Heart left ventricle (tissue), 16 donors: ENCODE measurements at regions of chr6 and their contacts with region 1.

Region 1: GRCh38 chr6:26122793-26123674 is 35.8 kb downstream of the HFE start:
- DNase-seq: peak; percentile 89 to 99 (median 98)
- ATAC-seq: peak; percentile 87 to 90 (median 88)
- H3K4me3 ChIP-seq: peak overlapping the region; percentile 73 to 97 (median 82)
- H3K27ac ChIP-seq: peak overlapping the region; percentile 95 to 99 (median 98)
- H3K4me1 ChIP-seq: peaks cover 0 to 25% (median 17%) of the 10 kb centered on the region in 12 donors
- H3K27me3 ChIP-seq: no peaks in the 10 kb centered on the region
- CTCF ChIP-seq: peak in 1 of 12 donors; percentile 7
- POLR2A ChIP-seq: peak; percentile 54 to 58

Region 2: DNA sequence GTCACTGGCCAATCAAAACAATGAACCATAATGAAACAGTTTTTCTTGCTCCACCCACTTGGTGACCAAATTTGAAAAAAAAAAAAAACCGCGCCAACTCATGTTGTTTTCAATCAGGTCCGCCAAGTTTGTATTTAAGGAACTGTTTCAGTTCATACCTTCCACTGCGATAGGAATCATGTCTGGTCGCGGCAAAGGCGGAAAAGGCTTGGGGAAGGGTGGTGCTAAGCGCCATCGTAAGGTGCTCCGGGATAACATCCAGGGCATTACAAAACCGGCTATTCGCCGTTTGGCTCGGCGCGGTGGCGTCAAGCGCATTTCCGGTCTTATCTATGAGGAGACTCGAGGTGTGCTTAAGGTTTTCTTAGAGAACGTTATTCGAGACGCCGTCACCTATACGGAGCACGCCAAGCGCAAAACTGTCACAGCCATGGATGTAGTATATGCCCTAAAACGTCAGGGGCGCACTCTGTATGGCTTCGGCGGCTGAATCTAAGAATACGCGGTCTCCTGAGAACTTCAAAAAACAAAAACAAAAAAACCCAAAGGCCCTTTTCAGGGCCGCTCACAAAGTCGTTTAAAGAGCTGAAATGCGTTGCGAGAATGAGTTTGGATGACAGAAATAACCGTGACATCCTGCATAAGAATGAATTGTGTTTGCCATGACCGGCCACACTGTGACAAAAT is 19.1 kb before region 1 on chr6:
- intact Hi-C with region 1: loop called in 5 of 10 experiments (anchors 1 to 2 kb)
- DNase-seq: peak; percentile 86 to 90 (median 87)
- ATAC-seq: peak; percentile 81 to 95 (median 93)
- H3K4me3 ChIP-seq: peak overlapping the region; percentile 5 to 69 (median 60)
- H3K27ac ChIP-seq: peak overlapping the region; percentile 18 to 90 (median 77)
- H3K4me1 ChIP-seq: peaks cover 0 to 18% (median 8%) of the 10 kb centered on the region in 12 donors
- H3K27me3 ChIP-seq: no peaks in the 10 kb centered on the region
- CTCF ChIP-seq: peak in 10 of 12 donors; percentile 17 to 54 (median 36)
- POLR2A ChIP-seq: peak; percentile 37 to 95

Region 3: DNA sequence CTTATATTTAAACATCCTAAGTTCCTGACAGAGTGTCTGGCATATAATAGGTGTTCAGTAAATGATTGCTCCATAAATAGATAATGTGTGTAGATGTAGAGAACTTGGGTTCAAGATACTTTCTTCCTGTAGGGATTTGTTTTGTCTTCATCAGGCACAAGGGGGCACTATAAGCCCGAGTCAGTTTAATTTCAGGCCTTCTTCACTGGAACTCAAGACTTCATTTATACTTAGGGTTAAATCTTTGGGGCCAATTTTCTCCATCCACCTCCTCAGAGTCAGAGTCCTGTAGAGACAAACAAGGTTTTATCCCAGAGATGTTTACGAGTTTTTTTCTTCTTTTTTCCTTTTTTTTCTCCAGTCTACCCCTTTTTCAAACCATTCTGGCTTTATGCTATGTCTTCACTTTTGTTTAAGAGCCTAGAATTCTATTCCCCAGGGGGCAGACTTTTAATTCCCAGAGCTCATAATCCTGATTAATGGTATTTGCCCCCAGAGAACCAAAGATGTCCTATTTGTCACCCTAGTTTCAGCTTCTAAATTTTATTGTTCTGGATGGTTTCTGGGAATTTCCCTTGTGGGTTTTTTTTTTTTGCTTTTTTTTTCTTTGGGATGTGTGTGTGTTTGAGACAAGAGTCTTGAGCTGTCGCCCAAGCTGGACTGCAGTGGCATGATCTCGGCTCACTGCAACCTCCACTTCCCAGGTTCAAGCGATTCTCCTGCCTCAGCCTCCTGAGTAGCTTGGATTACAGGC is 52.6 kb after region 1 on chr6:
- intact Hi-C with region 1: loop called in 1 of 10 experiments (anchors 1 kb)
- DNase-seq: no peak
- ATAC-seq: no peak
- H3K4me3 ChIP-seq: no peak overlapping the region
- H3K27ac ChIP-seq: peak overlapping the region in 2 of 12 donors; percentile 1 to 40
- H3K4me1 ChIP-seq: peaks cover 0 to 20% (median 9%) of the 10 kb centered on the region in 12 donors
- H3K27me3 ChIP-seq: no peaks in the 10 kb centered on the region
- CTCF ChIP-seq: peak; percentile 45 to 76 (median 62)
- POLR2A ChIP-seq: no peak

Region 4: GRCh38 chr6:26204332-26205165 is 81.5 kb after region 1 on chr6:
- intact Hi-C with region 1: loop called in 6 of 10 experiments (anchors 2 to 10 kb)
- DNase-seq: peak; percentile 89 to 97 (median 95)
- ATAC-seq: peak; percentile 90 to 94 (median 92)
- H3K4me3 ChIP-seq: peak overlapping the region; percentile 56 to 83 (median 74)
- H3K27ac ChIP-seq: peak overlapping the region; percentile 83 to 98 (median 94)
- H3K4me1 ChIP-seq: peaks cover 0 to 43% (median 7%) of the 10 kb centered on the region in 12 donors
- H3K27me3 ChIP-seq: peaks cover 0 to 15% (median 0%) of the 10 kb centered on the region in 9 donors
- CTCF ChIP-seq: peak in 11 of 12 donors; percentile 19 to 71 (median 36)
- POLR2A ChIP-seq: peak in 1 of 2 donors; percentile 82

Region 5: GRCh38 chr6:26351544-26351953 is 228.5 kb after region 1 on chr6:
- intact Hi-C with region 1: no loop called
- DNase-seq: no peak
- ATAC-seq: no peak
- H3K4me3 ChIP-seq: no peak overlapping the region
- H3K27ac ChIP-seq: no peak overlapping the region
- H3K4me1 ChIP-seq: no peaks in the 10 kb centered on the region
- H3K27me3 ChIP-seq: no peaks in the 10 kb centered on the region
- CTCF ChIP-seq: no peak
- POLR2A ChIP-seq: no peak